ENCODE measurements at regions of chr1 and their contacts with region 1.

Region 1: DNA sequence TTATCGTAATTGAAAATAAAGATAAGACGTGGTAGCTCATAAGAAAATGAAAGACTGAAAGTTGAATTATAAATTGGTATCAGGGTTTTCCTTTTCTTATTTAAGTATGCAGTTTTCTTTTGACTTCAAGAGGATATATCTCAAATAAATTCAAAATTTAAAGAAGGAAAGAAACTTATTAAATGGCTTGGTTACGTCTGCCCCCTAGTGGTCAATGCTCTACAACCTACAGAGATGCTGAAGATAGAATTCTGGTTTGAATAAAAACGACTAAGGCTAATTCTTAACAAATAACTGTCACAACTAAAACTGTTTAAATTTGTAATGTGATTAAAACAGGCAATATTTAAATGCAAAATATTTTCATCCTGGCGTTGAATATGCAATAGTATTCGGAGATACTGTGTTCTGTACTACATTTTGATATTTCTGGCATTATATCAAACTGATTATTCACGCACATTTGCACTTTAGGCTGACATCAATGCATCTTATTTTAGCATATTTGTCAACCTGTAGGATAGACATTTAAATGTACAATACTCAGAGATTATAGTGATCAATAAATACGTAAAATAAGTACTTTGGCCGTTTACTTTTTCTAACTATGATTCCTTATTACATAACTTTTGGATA is 26.8 kb downstream of the IFI44 start:
- DNase-seq: peak in 1 of 2 experiments; percentile 16
- H3K4me3 ChIP-seq: no peak overlapping the region
- H3K27ac ChIP-seq: no peak overlapping the region
- H3K4me1 ChIP-seq: no peaks in the 10 kb centered on the region
- H3K27me3 ChIP-seq: no peaks in the 10 kb centered on the region
- CTCF ChIP-seq: peak; percentile 94

Region 2: DNA sequence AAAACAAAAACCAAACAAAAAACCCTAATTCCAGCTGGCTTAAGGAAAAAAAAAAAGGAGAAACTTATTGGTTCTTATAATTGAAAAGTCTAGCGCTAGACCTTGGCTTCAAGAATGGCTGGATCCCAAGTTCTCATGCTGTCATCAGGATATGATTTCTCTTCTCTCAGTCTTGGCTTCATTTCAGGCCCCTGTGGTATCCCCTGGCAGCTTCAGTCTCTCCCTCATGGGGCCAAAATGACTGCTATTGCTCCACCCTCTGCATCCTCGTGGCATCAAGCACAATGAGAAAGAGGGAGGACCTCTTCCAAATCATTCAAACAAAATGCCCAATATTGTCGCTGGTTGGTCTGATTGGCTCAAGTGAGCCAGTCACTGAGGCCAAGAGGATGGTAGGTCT is 550.0 kb before region 1 on chr1:
- CTCF ChIA-PET with region 1: no interaction called
- POLR2A ChIA-PET with region 1: no interaction called
- intact Hi-C with region 1: loop called (anchors 2 kb)
- DNase-seq: no peak
- H3K4me3 ChIP-seq: no peak overlapping the region
- H3K27ac ChIP-seq: no peak overlapping the region
- H3K4me1 ChIP-seq: no peaks in the 10 kb centered on the region
- H3K27me3 ChIP-seq: no peaks in the 10 kb centered on the region
- CTCF ChIP-seq: no peak

Region 3: GRCh38 chr1:78145105-78145580 is 531.3 kb before region 1 on chr1:
- CTCF ChIA-PET with region 1: no interaction called
- POLR2A ChIA-PET with region 1: no interaction called
- intact Hi-C with region 1: loop called (anchors 1 kb)
- DNase-seq: peak; percentile 35 to 51
- H3K4me3 ChIP-seq: no peak overlapping the region
- H3K27ac ChIP-seq: no peak overlapping the region
- H3K4me1 ChIP-seq: no peaks in the 10 kb centered on the region
- H3K27me3 ChIP-seq: no peaks in the 10 kb centered on the region
- CTCF ChIP-seq: peak; percentile 98

Region 4: DNA sequence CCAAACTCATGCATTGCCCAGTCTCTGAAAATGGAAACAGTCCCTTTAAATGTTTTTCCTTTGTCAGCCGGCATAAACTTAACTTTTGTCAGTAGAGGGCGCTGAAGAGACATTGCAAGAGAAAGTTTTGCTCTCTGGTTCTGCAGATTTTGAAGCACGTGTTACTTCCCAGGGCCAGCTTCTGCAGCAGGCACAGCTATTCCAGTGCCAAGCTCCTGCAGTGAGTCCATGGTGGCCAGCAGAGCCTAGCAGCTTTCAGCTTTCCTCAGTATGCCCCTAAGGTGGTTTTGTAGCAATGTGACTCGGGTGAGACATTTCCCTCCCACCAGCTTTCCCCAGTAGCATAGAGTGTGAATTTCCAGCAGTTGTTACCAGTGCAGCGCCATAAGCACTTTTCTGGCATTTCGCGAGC is 58.8 kb before region 1 on chr1:
- CTCF ChIA-PET with region 1: interaction called, 4 read pairs
- POLR2A ChIA-PET with region 1: no interaction called
- intact Hi-C with region 1: loop called (anchors 1 kb)
- DNase-seq: peak; percentile 31 to 53
- H3K4me3 ChIP-seq: no peak overlapping the region
- H3K27ac ChIP-seq: no peak overlapping the region
- H3K4me1 ChIP-seq: peaks cover 13% of the 10 kb centered on the region
- H3K27me3 ChIP-seq: no peaks in the 10 kb centered on the region
- CTCF ChIP-seq: peak; percentile 83

Region 5: GRCh38 chr1:79259388-79260336 is 583.2 kb after region 1 on chr1:
- CTCF ChIA-PET with region 1: no interaction called
- POLR2A ChIA-PET with region 1: no interaction called
- intact Hi-C with region 1: no loop called
- DNase-seq: no peak
- H3K4me3 ChIP-seq: no peak overlapping the region
- H3K27ac ChIP-seq: no peak overlapping the region
- H3K4me1 ChIP-seq: no peaks in the 10 kb centered on the region
- H3K27me3 ChIP-seq: no peaks in the 10 kb centered on the region
- CTCF ChIP-seq: peak; percentile 75

Measured in PC-9 (cell line).